ENCODE measurements at regions of chr10 and their contacts with region 1.

Region 1: DNA sequence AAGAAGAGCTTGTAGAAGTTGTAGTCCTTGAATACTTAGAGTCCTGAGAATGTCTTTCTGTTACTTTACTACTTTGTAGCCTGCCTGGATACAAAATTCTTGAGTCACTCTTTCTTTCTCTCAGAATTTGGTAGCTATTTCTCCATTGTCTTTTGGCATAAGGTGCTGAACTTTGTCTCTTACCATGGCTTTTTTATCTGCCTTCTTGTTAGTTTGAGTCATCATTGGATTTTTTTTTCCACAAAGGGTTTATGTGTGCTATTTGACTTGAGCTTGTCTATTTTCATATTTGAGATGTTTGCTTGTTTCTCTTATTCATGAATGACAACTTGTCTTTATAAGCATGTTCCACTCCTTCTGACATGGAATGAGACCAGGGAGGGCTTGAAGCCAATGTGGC is 74.5 kb upstream of the EXOC6 start:
- DNase-seq: no peak
- H3K4me3 ChIP-seq: no peak overlapping the region
- H3K27ac ChIP-seq: no peak overlapping the region
- H3K4me1 ChIP-seq: no peaks in the 10 kb centered on the region
- H3K27me3 ChIP-seq: no peaks in the 10 kb centered on the region
- CTCF ChIP-seq: no peak
- EP300 ChIP-seq: no peak
- POLR2A ChIP-seq: no peak

Region 2: GRCh38 chr10:92810934-92811532 is 37.3 kb after region 1 on chr10:
- intact Hi-C with region 1: loop called (anchors 5 kb)
- DNase-seq: no peak
- H3K4me3 ChIP-seq: no peak overlapping the region
- H3K27ac ChIP-seq: no peak overlapping the region
- H3K4me1 ChIP-seq: peaks cover 0 to 11% (median 3%) of the 10 kb centered on the region in 4 donors
- H3K27me3 ChIP-seq: no peaks in the 10 kb centered on the region
- CTCF ChIP-seq: no peak
- EP300 ChIP-seq: no peak
- POLR2A ChIP-seq: no peak

Region 3: GRCh38 chr10:92857904-92858514 is 84.2 kb after region 1 on chr10:
- intact Hi-C with region 1: no loop called
- DNase-seq: no peak
- H3K4me3 ChIP-seq: no peak overlapping the region
- H3K27ac ChIP-seq: no peak overlapping the region
- H3K4me1 ChIP-seq: no peaks in the 10 kb centered on the region
- H3K27me3 ChIP-seq: no peaks in the 10 kb centered on the region
- CTCF ChIP-seq: no peak
- EP300 ChIP-seq: no peak
- POLR2A ChIP-seq: no peak